Heart left ventricle (tissue), 16 donors: ENCODE measurements at regions of chr19 and their contacts with region 1.

Region 1: GRCh38 chr19:40662921-40663694 is 27.3 kb downstream of the NUMBL start:
- DNase-seq: peak; percentile 91 to 95 (median 93)
- ATAC-seq: peak; percentile 79 to 90 (median 85)
- H3K4me3 ChIP-seq: peak overlapping the region; percentile 28 to 76 (median 64)
- H3K27ac ChIP-seq: peak overlapping the region; percentile 2 to 95 (median 88)
- H3K4me1 ChIP-seq: peaks cover 0 to 20% (median 10%) of the 10 kb centered on the region in 12 donors
- H3K27me3 ChIP-seq: no peaks in the 10 kb centered on the region
- CTCF ChIP-seq: peak in 11 of 12 donors; percentile 96 to 99 (median 99)
- POLR2A ChIP-seq: no peak

Region 2: GRCh38 chr19:40633207-40633606 is 29.9 kb before region 1 on chr19:
- intact Hi-C with region 1: no loop called
- DNase-seq: no peak
- ATAC-seq: no peak
- H3K4me3 ChIP-seq: no peak overlapping the region
- H3K27ac ChIP-seq: no peak overlapping the region
- H3K4me1 ChIP-seq: peaks cover 0 to 19% (median 7%) of the 10 kb centered on the region in 12 donors
- H3K27me3 ChIP-seq: no peaks in the 10 kb centered on the region
- CTCF ChIP-seq: no peak
- POLR2A ChIP-seq: no peak

Region 3: DNA sequence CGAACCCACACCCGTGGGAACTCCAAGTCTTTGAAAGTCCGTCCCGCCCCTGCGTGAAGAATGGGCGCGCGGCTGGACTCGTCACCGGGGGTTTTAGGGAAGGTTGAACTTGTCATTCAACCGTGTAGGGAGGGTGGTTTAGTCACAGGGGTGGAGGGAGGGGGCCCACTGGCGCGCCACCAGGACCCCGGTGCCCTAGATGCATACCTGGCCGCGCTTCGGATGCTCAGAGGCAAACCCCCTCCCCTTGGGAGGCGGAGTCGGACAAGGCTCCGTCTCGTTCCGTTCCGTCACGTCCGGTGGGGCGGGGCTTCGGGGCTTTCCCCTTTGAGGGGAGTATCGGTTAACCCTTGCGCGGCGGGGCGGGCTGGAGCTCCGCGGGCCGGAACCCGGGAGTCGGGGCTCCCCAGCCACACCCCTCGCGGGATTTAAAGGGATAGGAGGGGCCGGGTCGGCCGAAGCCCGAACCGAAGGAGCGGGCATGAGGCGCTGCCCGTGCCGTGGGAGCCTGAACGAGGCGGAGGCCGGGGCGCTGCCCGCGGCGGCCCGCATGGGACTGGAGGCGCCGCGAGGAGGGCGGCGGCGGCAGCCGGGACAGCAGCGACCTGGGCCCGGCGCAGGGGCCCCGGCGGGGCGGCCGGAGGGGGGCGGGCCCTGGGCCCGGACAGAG is 53.7 kb after region 1 on chr19 and contains the starts of genes COQ8B and ITPKC:
- intact Hi-C with region 1: loop called in 4 of 10 experiments (anchors 2 to 10 kb)
- DNase-seq: peak; percentile 100
- ATAC-seq: peak; percentile 71 to 85 (median 82)
- H3K4me3 ChIP-seq: peak within 1 kb of the TSS; percentile 65 to 98 (median 82)
- H3K27ac ChIP-seq: peak within 1 kb of the TSS; percentile 95 to 99 (median 97)
- H3K4me1 ChIP-seq: peaks cover 5 to 78% (median 53%) of the 10 kb centered on the region in 12 donors
- H3K27me3 ChIP-seq: no peaks in the 10 kb centered on the region
- CTCF ChIP-seq: peak in 6 of 12 donors; percentile 13 to 38 (median 24)
- POLR2A ChIP-seq: peak; percentile 53 to 74
- total RNA-seq, gene COQ8B: 18.2 to 49.7 (median 27.8) TPM
- total RNA-seq, gene ITPKC: 6.9 to 27.3 (median 8.9) TPM

Region 4: GRCh38 chr19:40806488-40807468 is 143.7 kb after region 1 on chr19:
- intact Hi-C with region 1: loop called in 4 of 10 experiments (anchors 5 to 10 kb)
- DNase-seq: peak; percentile 84 to 90 (median 87)
- ATAC-seq: peak; percentile 38 to 64 (median 48)
- H3K4me3 ChIP-seq: peak overlapping the region in 9 of 12 donors; percentile 1 to 38 (median 20)
- H3K27ac ChIP-seq: peak overlapping the region; percentile 13 to 99 (median 97)
- H3K4me1 ChIP-seq: peaks cover 42 to 96% (median 82%) of the 10 kb centered on the region in 12 donors
- H3K27me3 ChIP-seq: no peaks in the 10 kb centered on the region
- CTCF ChIP-seq: peak; percentile 75 to 95 (median 86)
- POLR2A ChIP-seq: peak in 1 of 2 donors; percentile 33

Region 5: DNA sequence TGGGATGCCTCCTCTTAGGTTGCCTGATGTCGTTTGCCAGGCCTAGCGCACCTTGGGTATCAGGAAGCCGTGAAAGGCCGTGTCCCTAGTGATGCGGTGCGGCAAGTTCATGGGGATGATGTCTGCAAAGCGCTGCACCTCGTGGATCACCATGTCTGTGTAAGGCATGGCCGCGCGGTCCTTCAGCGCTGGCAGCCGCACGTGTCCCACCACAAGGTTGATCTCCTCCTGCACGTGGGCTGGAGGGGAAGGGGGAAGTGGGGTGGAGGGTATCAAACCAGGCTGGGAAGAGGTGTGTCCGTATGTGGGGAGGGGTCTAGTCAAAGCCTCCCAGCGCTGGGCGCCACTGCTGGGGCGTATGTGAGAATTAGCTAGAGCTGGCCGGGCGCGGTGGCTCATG is 159.1 kb after region 1 on chr19:
- intact Hi-C with region 1: loop called in 8 of 10 experiments (anchors 1 to 5 kb)
- DNase-seq: no peak
- ATAC-seq: no peak
- H3K4me3 ChIP-seq: no peak overlapping the region
- H3K27ac ChIP-seq: peak overlapping the region in 3 of 12 donors; percentile 47 to 54 (median 48)
- H3K4me1 ChIP-seq: peaks cover 0 to 42% (median 21%) of the 10 kb centered on the region in 12 donors
- H3K27me3 ChIP-seq: no peaks in the 10 kb centered on the region
- CTCF ChIP-seq: no peak
- POLR2A ChIP-seq: no peak

Region 6: GRCh38 chr19:41133260-41133659 is 470.2 kb after region 1 on chr19:
- intact Hi-C with region 1: loop called in 1 of 10 experiments (anchors 5 kb)
- DNase-seq: peak in 1 of 5 donors; percentile 31
- ATAC-seq: peak in 1 of 4 donors; percentile 18
- H3K4me3 ChIP-seq: no peak overlapping the region
- H3K27ac ChIP-seq: no peak overlapping the region
- H3K4me1 ChIP-seq: peaks cover 0 to 13% (median under 1%) of the 10 kb centered on the region in 12 donors
- H3K27me3 ChIP-seq: no peaks in the 10 kb centered on the region
- CTCF ChIP-seq: no peak
- POLR2A ChIP-seq: no peak

Region 7: GRCh38 chr19:41263850-41264580 is 600.9 kb after region 1 on chr19 and contains the start of gene HNRNPUL1:
- intact Hi-C with region 1: loop called in 4 of 10 experiments (anchors 5 to 10 kb)
- DNase-seq: peak; percentile 99
- ATAC-seq: peak; percentile 86 to 91 (median 87)
- H3K4me3 ChIP-seq: peak within 1 kb of the TSS; percentile 71 to 99 (median 92)
- H3K27ac ChIP-seq: peak within 1 kb of the TSS; percentile 91 to 100 (median 99)
- H3K4me1 ChIP-seq: peaks cover 3 to 36% (median 29%) of the 10 kb centered on the region in 12 donors
- H3K27me3 ChIP-seq: no peaks in the 10 kb centered on the region
- CTCF ChIP-seq: peak in 7 of 12 donors; percentile 10 to 49 (median 30)
- POLR2A ChIP-seq: peak in 1 of 2 donors; percentile 35
- total RNA-seq, gene HNRNPUL1: 88.7 to 138 (median 115) TPM